IMR-90 (cell line): ENCODE measurements at regions of chr6 and their contacts with region 1.

Region 1: DNA sequence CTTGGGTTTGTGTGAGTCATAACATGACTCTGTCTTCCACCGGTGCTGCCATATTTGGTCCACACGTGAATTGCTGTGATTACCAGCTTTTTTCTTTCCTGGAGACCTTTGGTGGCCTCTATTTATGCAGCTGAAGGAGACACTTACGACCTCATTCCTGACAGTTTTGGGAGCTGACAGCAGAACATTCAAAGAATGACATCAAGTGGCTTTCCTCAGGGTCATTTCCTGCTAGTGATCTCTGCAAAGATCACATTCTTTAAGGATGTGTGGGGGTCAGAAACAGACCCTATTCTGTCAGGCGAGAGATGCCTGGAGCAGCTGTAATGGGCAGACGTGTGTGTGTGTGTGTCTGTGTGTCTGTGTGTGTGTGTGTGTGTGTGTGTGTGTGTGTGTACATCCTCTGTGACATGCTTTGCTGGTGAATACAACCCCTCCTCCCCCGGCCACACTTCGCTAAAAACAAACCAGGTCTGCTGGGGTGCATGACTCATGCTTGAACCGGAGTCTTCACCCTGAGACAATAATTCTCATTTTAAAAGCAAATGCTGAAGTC is 115.6 kb downstream of the TMEM170B start:
- DNase-seq: peak; percentile 97
- ATAC-seq: peak; percentile 61
- H3K4me3 ChIP-seq: no peak overlapping the region
- H3K27ac ChIP-seq: peak overlapping the region; percentile 63
- H3K4me1 ChIP-seq: peaks cover 36% of the 10 kb centered on the region
- H3K27me3 ChIP-seq: no peaks in the 10 kb centered on the region
- CTCF ChIP-seq: no peak
- POLR2A ChIP-seq: no peak
- RAD21 ChIP-seq: no peak

Region 2: DNA sequence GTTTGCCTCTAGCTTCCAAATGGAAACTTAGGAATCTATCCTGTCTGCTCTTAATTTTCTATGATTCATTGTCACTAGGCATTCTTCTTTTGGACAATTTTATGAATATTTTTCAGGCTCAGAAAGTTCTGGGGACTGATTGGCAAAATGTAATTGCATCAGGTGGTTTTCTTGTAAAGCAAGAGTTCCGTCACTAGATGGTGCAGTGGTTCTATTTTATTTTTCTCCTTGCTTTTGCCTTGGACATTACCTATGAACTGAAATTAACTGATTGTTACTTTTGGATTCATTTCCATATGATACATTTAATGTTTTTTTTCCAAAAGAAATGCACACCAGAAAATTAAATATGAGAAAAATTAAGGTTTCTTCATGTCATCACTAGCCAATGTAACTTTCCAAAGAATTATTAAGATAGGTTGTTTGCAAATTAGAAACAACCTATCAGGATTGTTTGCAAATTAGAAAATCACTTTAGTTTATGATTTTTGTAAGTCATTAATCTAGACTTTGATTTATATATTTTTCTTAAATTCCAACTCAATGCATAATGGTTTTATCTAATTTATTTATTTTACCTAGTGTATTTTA is 67.6 kb before region 1 on chr6:
- CTCF ChIA-PET with region 1: interaction called, 6 read pairs
- POLR2A ChIA-PET with region 1: no interaction called
- dilution Hi-C with region 1: no loop called
- in situ Hi-C with region 1: loop called (anchors 5 kb)
- intact Hi-C with region 1: loop called (anchors 1 kb)
- DNase-seq: peak; percentile 79
- ATAC-seq: peak; percentile 44
- H3K4me3 ChIP-seq: no peak overlapping the region
- H3K27ac ChIP-seq: peak overlapping the region; percentile 62; the same call in 1 of the 2 replicates
- H3K4me1 ChIP-seq: peaks cover 13% of the 10 kb centered on the region
- H3K27me3 ChIP-seq: no peaks in the 10 kb centered on the region
- CTCF ChIP-seq: peak; percentile 82
- POLR2A ChIP-seq: no peak
- RAD21 ChIP-seq: peak; percentile 85

Region 3: DNA sequence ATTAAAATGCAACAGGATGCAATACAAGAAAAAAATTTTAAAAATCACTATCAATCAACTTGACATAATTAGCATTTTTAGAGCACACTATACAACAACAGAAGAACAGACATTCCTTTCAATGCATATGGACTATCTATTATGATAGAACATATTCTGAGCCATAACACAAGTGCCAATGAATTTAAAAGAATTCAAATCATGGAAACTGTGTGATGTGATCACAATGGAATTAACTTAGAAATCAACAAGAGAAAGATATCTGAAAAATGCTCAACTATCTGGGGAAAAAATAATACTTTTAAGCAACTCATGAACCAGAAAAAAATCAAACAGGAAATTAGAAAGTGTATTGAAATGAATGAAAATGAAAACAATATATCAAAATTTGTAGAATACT is 19.1 kb after region 1 on chr6:
- CTCF ChIA-PET with region 1: no interaction called
- POLR2A ChIA-PET with region 1: no interaction called
- dilution Hi-C with region 1: no loop called
- in situ Hi-C with region 1: no loop called
- intact Hi-C with region 1: no loop called
- DNase-seq: peak; percentile 52
- ATAC-seq: peak; percentile 54
- H3K4me3 ChIP-seq: no peak overlapping the region
- H3K27ac ChIP-seq: no peak overlapping the region
- H3K4me1 ChIP-seq: no peaks in the 10 kb centered on the region; the same call in 1 of the 2 replicates
- H3K27me3 ChIP-seq: no peaks in the 10 kb centered on the region
- CTCF ChIP-seq: no peak
- POLR2A ChIP-seq: no peak
- RAD21 ChIP-seq: no peak

Region 4: GRCh38 chr6:11700118-11700718 is 47.1 kb after region 1 on chr6:
- CTCF ChIA-PET with region 1: interaction called, 4 read pairs
- POLR2A ChIA-PET with region 1: no interaction called
- dilution Hi-C with region 1: no loop called
- in situ Hi-C with region 1: no loop called
- intact Hi-C with region 1: loop called (anchors 5 kb)
- DNase-seq: peak; percentile 73
- ATAC-seq: peak; percentile 29; the same call in 1 of the 2 replicates
- H3K4me3 ChIP-seq: no peak overlapping the region
- H3K27ac ChIP-seq: no peak overlapping the region
- H3K4me1 ChIP-seq: peaks cover 6% of the 10 kb centered on the region; the same call in 1 of the 2 replicates
- H3K27me3 ChIP-seq: no peaks in the 10 kb centered on the region
- CTCF ChIP-seq: peak; percentile 64
- POLR2A ChIP-seq: no peak
- RAD21 ChIP-seq: peak; percentile 69

Region 5: DNA sequence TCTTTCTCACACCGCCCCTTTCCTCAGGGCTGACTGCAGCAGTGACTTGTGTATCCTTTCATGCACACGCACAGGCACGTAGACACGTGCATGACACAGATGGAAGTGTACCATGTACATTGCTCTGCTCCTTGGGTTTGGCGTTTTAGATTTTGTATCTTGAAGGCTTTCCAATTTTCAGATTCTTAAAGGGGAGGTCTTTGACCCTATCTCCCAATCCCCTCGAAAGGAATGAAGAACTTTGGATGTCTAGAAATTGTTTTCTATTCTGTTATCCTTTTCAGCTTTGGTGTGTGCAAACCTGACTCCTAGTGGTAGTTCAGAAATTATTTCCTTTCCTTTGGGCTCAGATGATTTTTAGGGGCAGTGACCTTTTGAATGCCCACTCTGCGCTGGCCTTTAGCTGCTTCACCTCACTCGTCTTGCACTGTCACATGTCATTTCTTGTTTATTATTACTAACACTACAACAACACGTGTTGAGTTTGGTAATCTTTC is 422.0 kb after region 1 on chr6:
- CTCF ChIA-PET with region 1: no interaction called
- POLR2A ChIA-PET with region 1: interaction called, 3 read pairs
- dilution Hi-C with region 1: no loop called
- in situ Hi-C with region 1: no loop called
- intact Hi-C with region 1: loop called (anchors 2 kb)
- DNase-seq: no peak
- ATAC-seq: peak; percentile 54
- H3K4me3 ChIP-seq: no peak overlapping the region
- H3K27ac ChIP-seq: no peak overlapping the region
- H3K4me1 ChIP-seq: no peaks in the 10 kb centered on the region
- H3K27me3 ChIP-seq: no peaks in the 10 kb centered on the region
- CTCF ChIP-seq: peak; percentile 53
- POLR2A ChIP-seq: no peak
- RAD21 ChIP-seq: peak; percentile 60

Region 6: DNA sequence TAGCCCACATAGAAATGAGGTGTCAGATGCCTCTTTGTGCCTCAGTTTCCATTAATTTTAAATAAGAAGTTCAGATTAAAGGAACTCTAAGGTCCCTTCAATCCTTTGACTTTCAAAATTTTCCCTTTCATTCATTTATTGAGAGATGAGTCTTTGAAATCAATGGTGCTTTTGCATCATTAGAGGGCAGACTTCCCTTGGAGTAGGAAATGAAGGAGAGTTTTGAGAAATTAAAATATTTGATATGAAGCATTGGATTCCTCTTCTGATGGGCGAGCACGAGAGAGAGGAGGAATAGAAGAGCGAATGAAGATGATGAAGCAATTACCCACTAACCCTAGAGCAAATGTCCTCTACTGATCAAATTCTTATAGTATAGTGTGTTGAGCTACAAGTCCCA is 742.8 kb after region 1 on chr6:
- CTCF ChIA-PET with region 1: interaction called, 3 read pairs
- POLR2A ChIA-PET with region 1: no interaction called
- dilution Hi-C with region 1: no loop called
- in situ Hi-C with region 1: no loop called
- intact Hi-C with region 1: loop called (anchors 10 kb)
- DNase-seq: no peak
- ATAC-seq: no peak
- H3K4me3 ChIP-seq: no peak overlapping the region
- H3K27ac ChIP-seq: no peak overlapping the region
- H3K4me1 ChIP-seq: no peaks in the 10 kb centered on the region
- H3K27me3 ChIP-seq: no peaks in the 10 kb centered on the region
- CTCF ChIP-seq: peak; percentile 51
- POLR2A ChIP-seq: no peak
- RAD21 ChIP-seq: peak; percentile 58

Region 7: GRCh38 chr6:12890171-12890790 is 1237.2 kb after region 1 on chr6:
- CTCF ChIA-PET with region 1: no interaction called
- POLR2A ChIA-PET with region 1: no interaction called
- dilution Hi-C with region 1: no loop called
- in situ Hi-C with region 1: no loop called
- intact Hi-C with region 1: loop called (anchors 10 kb)
- DNase-seq: no peak
- ATAC-seq: no peak
- H3K4me3 ChIP-seq: no peak overlapping the region
- H3K27ac ChIP-seq: no peak overlapping the region
- H3K4me1 ChIP-seq: no peaks in the 10 kb centered on the region
- H3K27me3 ChIP-seq: no peaks in the 10 kb centered on the region
- CTCF ChIP-seq: peak; percentile 22; the same call in 1 of the 2 replicates
- POLR2A ChIP-seq: no peak
- RAD21 ChIP-seq: no peak